ENCODE measurements at regions of chr2 and their contacts with region 1.

Region 1: GRCh38 chr2:216108967-216109921 is at the start of gene XRCC5:
- DNase-seq: peak; percentile 90 to 95 (median 92)
- ATAC-seq: peak; percentile 85
- H3K4me3 ChIP-seq: peak within 1 kb of the TSS; percentile 71
- H3K27ac ChIP-seq: peak within 1 kb of the TSS; percentile 88
- H3K4me1 ChIP-seq: peaks cover 5 to 15% of the 10 kb centered on the region in 2 experiments; a peak in 4 of 5 replicates
- H3K27me3 ChIP-seq: no peaks in the 10 kb centered on the region
- CTCF ChIP-seq: no peak
- EP300 ChIP-seq: no peak
- POLR2A ChIP-seq: peak; percentile 93
- RAD21 ChIP-seq: no peak
- polyA plus RNA-seq, gene XRCC5: 325 to 369 TPM

Region 2: GRCh38 chr2:215949991-215950404 is 159.2 kb before region 1 on chr2:
- CTCF ChIA-PET with region 1: no interaction called
- POLR2A ChIA-PET with region 1: no interaction called
- in situ Hi-C with region 1: no loop called
- intact Hi-C with region 1: loop called (anchors 10 kb)
- DNase-seq: peak in 3 of 4 experiments; percentile 20 to 33 (median 25)
- ATAC-seq: peak; percentile 80
- H3K4me3 ChIP-seq: no peak overlapping the region
- H3K27ac ChIP-seq: no peak overlapping the region
- H3K4me1 ChIP-seq: no peaks in the 10 kb centered on the region
- H3K27me3 ChIP-seq: no peaks in the 10 kb centered on the region
- CTCF ChIP-seq: peak; percentile 33 to 53 (median 47); a peak in 4 of 6 replicates
- EP300 ChIP-seq: no peak
- POLR2A ChIP-seq: no peak
- RAD21 ChIP-seq: peak; percentile 52 to 75; a peak in 3 of 4 replicates

Region 3: GRCh38 chr2:216034065-216034464 is 75.2 kb before region 1 on chr2:
- CTCF ChIA-PET with region 1: no interaction called
- POLR2A ChIA-PET with region 1: no interaction called
- in situ Hi-C with region 1: no loop called
- intact Hi-C with region 1: loop called (anchors 5 kb)
- DNase-seq: peak; percentile 57 to 69 (median 68)
- ATAC-seq: peak; percentile 85
- H3K4me3 ChIP-seq: no peak overlapping the region
- H3K27ac ChIP-seq: no peak overlapping the region
- H3K4me1 ChIP-seq: no peaks in the 10 kb centered on the region; a peak in 2 of 5 replicates
- H3K27me3 ChIP-seq: no peaks in the 10 kb centered on the region
- CTCF ChIP-seq: peak; percentile 57 to 77 (median 69)
- EP300 ChIP-seq: no peak
- POLR2A ChIP-seq: no peak
- RAD21 ChIP-seq: peak; percentile 36 to 53; a peak in 3 of 4 replicates

Region 4: DNA sequence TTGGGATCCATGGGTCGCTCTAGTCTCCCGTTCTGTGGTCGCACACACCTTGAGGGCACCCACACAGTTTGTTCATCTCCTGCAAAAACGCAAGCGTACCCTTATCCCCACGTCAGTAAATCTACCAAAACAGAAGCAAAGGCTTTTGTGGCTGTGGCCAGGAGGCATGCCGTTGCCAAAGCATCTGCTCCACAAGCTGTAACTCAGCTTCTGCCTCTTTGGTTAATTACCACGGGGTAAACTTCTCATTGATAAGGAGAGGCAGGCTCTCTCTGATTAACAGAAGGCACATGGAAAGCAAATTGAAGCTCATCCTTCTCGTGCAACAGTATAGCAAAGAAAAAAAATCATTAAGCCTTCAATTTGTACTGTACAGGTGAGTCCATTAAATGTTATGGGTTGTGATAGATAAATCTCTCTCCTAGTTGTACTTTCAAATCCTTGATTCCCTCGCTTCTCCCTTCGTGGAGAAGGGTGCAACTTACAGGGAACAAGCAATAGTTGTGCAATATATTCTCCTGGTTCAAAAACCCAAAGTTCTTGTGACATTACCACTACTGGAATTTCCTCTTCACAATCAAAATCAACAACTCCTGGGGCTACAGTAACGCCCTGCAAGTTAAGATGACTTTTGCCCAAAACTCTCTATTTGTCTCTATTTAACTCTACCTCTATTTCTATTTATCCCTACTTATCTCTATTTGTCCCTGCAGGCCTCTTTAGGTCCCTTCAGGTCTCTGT is 38.0 kb before region 1 on chr2:
- CTCF ChIA-PET with region 1: no interaction called
- POLR2A ChIA-PET with region 1: no interaction called
- in situ Hi-C with region 1: no loop called
- intact Hi-C with region 1: loop called (anchors 5 kb)
- DNase-seq: no peak
- ATAC-seq: no peak
- H3K4me3 ChIP-seq: no peak overlapping the region
- H3K27ac ChIP-seq: no peak overlapping the region
- H3K4me1 ChIP-seq: no peaks in the 10 kb centered on the region; a peak in 1 of 5 replicates
- H3K27me3 ChIP-seq: no peaks in the 10 kb centered on the region
- CTCF ChIP-seq: no peak
- EP300 ChIP-seq: no peak
- POLR2A ChIP-seq: no peak
- RAD21 ChIP-seq: no peak

Region 5: DNA sequence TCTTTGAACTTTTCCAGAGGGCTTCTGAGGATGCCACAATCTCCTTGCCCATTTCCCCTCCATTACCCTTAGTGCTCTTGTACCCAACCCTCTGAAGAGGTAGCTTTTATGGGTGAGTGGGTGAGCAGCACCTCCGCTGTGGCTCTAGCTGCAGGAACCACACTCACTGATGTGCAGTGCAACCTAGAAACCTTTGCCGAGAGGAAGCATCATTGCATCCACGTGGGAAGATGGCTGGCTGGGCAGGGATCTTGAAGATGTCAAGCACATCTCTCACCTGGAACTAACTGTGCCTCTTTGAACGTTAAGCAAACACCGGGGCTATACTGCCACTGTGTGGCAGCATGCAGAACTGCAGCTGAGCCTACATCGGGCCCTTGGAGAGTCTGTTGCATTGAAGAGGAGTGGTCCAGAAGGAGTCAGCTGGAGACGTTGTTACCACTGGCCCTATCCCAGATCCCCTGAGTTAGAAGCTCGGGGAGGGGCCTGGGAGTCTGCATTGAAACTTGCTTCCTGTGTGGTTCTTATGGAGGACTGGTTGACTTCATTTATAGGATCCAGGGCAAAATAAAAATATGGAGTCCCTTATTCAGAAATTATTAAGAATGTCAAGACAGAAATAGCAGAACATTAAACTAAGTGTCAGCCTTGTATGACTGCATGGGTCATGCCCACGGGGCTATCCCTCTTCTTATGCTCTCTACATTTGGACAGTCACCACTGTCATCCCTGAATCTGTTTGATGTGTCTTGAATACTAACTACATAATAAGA is 557.4 kb after region 1 on chr2:
- CTCF ChIA-PET with region 1: no interaction called
- POLR2A ChIA-PET with region 1: no interaction called
- in situ Hi-C with region 1: no loop called
- intact Hi-C with region 1: no loop called
- DNase-seq: peak; percentile 64 to 75 (median 66)
- ATAC-seq: peak; percentile 84
- H3K4me3 ChIP-seq: no peak overlapping the region
- H3K27ac ChIP-seq: no peak overlapping the region
- H3K4me1 ChIP-seq: peaks cover 9 to 10% of the 10 kb centered on the region in 2 experiments; a peak in 4 of 5 replicates
- H3K27me3 ChIP-seq: peaks cover 4 to 40% of the 10 kb centered on the region in 2 experiments; a peak in 4 of 5 replicates
- CTCF ChIP-seq: peak; percentile 84 to 90 (median 86)
- EP300 ChIP-seq: no peak
- POLR2A ChIP-seq: no peak
- RAD21 ChIP-seq: peak; percentile 88 to 93

Region 6: GRCh38 chr2:216700088-216700567 is 590.9 kb after region 1 on chr2:
- CTCF ChIA-PET with region 1: no interaction called
- POLR2A ChIA-PET with region 1: no interaction called
- in situ Hi-C with region 1: no loop called
- intact Hi-C with region 1: no loop called
- DNase-seq: no peak
- ATAC-seq: no peak
- H3K4me3 ChIP-seq: no peak overlapping the region
- H3K27ac ChIP-seq: no peak overlapping the region
- H3K4me1 ChIP-seq: no peaks in the 10 kb centered on the region; a peak in 3 of 5 replicates
- H3K27me3 ChIP-seq: no peaks in the 10 kb centered on the region; a peak in 1 of 5 replicates
- CTCF ChIP-seq: no peak
- EP300 ChIP-seq: no peak
- POLR2A ChIP-seq: no peak
- RAD21 ChIP-seq: no peak